Endothelial cell of umbilical vein (primary cell): ENCODE measurements at regions of chr2 and their contacts with region 1.

Region 1: GRCh38 chr2:118221666-118222594 is 133.7 kb downstream of the INSIG2 start:
- DNase-seq: peak; percentile 69
- H3K4me3 ChIP-seq: no peak overlapping the region
- H3K27ac ChIP-seq: no peak overlapping the region
- H3K4me1 ChIP-seq: peaks cover 6% of the 10 kb centered on the region
- H3K27me3 ChIP-seq: peaks cover 41 to 65% of the 10 kb centered on the region in 2 experiments
- CTCF ChIP-seq: peak; percentile 46 to 70
- POLR2A ChIP-seq: no peak

Region 2: GRCh38 chr2:118207889-118208288 is 14.0 kb before region 1 on chr2:
- CTCF ChIA-PET with region 1: interaction called, 10 read pairs
- POLR2A ChIA-PET with region 1: no interaction called
- dilution Hi-C with region 1: no loop called
- intact Hi-C with region 1: no loop called
- DNase-seq: no peak
- H3K4me3 ChIP-seq: no peak overlapping the region
- H3K27ac ChIP-seq: no peak overlapping the region
- H3K4me1 ChIP-seq: no peaks in the 10 kb centered on the region
- H3K27me3 ChIP-seq: peaks cover 7 to 10% of the 10 kb centered on the region in 2 experiments
- CTCF ChIP-seq: no peak
- POLR2A ChIP-seq: no peak

Region 3: DNA sequence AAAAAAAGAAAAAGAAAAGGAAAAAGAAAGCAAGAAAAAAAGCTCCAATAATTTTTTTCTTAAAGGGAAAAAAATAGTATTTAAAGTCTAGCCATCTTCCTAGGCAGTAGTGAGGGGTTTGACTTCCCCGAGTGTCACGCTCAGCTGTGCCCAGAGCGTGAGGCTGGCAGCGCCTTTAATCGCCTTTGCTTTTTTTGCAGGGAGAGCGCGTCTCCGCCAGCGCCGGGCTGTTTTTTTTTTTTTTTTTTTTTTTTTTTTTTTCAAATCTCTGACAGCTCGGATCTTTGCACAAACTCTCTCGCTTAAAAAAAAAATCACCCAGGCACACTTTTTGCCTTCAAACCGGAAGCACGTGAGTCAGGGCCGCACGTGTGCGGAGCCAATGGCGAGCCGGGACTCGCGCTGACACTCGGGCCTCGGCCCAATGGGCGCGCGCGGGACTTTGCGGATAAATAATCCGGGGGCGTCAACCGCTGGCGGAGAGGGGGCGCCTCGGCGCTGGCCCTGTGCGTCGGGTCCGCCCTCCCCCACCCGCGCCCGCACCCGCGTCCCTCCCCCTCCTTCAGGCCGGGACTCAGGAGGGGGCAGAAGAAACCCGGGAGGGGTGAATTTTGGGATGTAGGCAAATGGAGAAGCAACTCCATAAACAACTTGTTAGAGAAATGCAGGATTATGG is 625.7 kb after region 1 on chr2 and contains the start of gene EN1:
- CTCF ChIA-PET with region 1: interaction called, 14 read pairs
- POLR2A ChIA-PET with region 1: no interaction called
- dilution Hi-C with region 1: no loop called
- intact Hi-C with region 1: no loop called
- DNase-seq: no peak
- H3K4me3 ChIP-seq: no peak within 1 kb of the TSS
- H3K27ac ChIP-seq: no peak within 1 kb of the TSS
- H3K4me1 ChIP-seq: peaks cover 4% of the 10 kb centered on the region
- H3K27me3 ChIP-seq: peaks cover 87 to 94% of the 10 kb centered on the region in 2 experiments
- CTCF ChIP-seq: no peak
- POLR2A ChIP-seq: no peak
- total RNA-seq, gene EN1: not detected in 2 replicates